ENCODE measurements at regions of chr7 and their contacts with region 1.

Region 1: GRCh38 chr7:94657771-94658693 is 2.1 kb upstream of the SGCE start:
- DNase-seq: peak; percentile 92 to 96 (median 95)
- ATAC-seq: peak; percentile 97
- H3K4me3 ChIP-seq: peak overlapping the region; percentile 27
- H3K27ac ChIP-seq: no peak overlapping the region
- H3K4me1 ChIP-seq: peaks cover 0 to 10% of the 10 kb centered on the region in 2 experiments; a peak in 2 of 5 replicates
- H3K27me3 ChIP-seq: peaks cover 0 to 5% of the 10 kb centered on the region in 2 experiments; a peak in 1 of 5 replicates
- CTCF ChIP-seq: peak in 2 of 3 experiments; percentile 7 to 12; a peak in 1 of 6 replicates
- EP300 ChIP-seq: no peak
- POLR2A ChIP-seq: no peak
- RAD21 ChIP-seq: no peak

Region 2: DNA sequence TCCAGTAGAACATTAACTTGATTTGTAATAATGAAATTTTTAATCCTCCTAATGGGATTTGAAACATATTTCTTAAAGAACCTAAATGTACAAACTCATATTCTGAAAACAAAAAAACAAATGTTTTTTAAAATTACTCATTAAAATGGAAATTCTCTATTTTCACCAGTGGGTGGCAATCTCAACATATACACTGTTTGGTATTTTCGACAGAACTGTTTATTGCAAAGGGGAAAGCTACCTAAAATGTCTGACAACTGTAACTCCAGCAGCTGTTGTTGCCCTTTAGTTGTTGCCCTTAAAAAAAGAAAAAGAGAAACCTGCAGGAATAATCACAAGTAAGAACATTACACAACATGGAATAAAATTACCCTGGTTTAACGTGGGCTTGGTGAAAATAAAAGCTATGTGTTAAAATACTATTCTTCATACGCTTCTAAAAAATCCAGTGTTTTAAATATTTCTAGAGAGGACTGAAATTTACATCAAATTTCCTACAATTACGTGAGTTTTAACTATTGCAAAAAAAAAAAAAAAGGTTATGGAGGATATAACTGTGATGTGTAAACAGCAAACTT is 208.8 kb before region 1 on chr7:
- CTCF ChIA-PET with region 1: no interaction called
- POLR2A ChIA-PET with region 1: no interaction called
- in situ Hi-C with region 1: no loop called
- intact Hi-C with region 1: loop called (anchors 10 kb)
- DNase-seq: peak; percentile 21 to 34 (median 26)
- ATAC-seq: peak; percentile 65
- H3K4me3 ChIP-seq: no peak overlapping the region
- H3K27ac ChIP-seq: no peak overlapping the region
- H3K4me1 ChIP-seq: no peaks in the 10 kb centered on the region
- H3K27me3 ChIP-seq: no peaks in the 10 kb centered on the region
- CTCF ChIP-seq: peak; percentile 32 to 68 (median 38); a peak in 3 of 6 replicates
- EP300 ChIP-seq: no peak
- POLR2A ChIP-seq: no peak
- RAD21 ChIP-seq: peak; percentile 74 to 80

Region 3: DNA sequence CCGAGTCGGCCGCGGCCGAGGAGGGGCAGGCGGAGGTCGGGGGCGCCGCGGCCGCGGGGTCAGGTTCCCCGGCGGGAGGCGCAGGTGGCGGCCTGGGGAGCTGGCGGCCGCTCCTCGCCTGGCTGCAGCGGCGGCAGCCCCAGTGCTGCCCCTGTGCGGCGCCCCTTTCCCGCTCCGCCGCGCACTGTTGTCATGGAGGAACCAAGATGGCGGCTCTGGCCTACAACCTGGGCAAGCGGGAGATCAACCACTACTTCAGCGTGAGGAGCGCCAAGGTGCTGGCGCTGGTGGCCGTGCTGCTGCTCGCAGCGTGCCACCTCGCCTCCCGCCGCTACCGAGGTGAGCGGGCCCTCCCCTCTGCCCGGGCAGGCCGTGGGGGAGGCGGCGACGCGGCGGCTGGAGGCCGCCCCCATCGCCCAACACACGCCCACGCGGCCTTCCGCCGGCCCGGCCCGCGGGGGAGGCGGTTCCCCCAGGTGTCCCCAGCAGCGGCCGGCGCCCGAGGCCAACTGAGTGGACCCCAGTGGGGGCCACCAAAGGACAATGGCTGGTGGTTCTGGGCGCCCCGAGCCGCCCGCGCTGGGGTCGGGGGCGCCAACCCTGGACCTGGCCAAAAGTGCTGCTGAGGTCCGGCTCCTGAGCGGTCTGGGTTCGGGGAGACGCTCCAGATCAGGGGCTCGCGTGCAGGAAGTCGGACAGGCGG is 148.0 kb before region 1 on chr7:
- CTCF ChIA-PET with region 1: no interaction called
- POLR2A ChIA-PET with region 1: no interaction called
- in situ Hi-C with region 1: no loop called
- intact Hi-C with region 1: loop called (anchors 5 kb)
- DNase-seq: peak; percentile 79 to 91 (median 90)
- ATAC-seq: peak; percentile 93
- H3K4me3 ChIP-seq: peak overlapping the region; percentile 71
- H3K27ac ChIP-seq: peak overlapping the region; percentile 95
- H3K4me1 ChIP-seq: peaks cover 12 to 16% of the 10 kb centered on the region in 2 experiments; a peak in 4 of 5 replicates
- H3K27me3 ChIP-seq: no peaks in the 10 kb centered on the region
- CTCF ChIP-seq: peak; percentile 25 to 35 (median 31); a peak in 3 of 6 replicates
- EP300 ChIP-seq: no peak
- POLR2A ChIP-seq: peak; percentile 82
- RAD21 ChIP-seq: no peak

Region 4: DNA sequence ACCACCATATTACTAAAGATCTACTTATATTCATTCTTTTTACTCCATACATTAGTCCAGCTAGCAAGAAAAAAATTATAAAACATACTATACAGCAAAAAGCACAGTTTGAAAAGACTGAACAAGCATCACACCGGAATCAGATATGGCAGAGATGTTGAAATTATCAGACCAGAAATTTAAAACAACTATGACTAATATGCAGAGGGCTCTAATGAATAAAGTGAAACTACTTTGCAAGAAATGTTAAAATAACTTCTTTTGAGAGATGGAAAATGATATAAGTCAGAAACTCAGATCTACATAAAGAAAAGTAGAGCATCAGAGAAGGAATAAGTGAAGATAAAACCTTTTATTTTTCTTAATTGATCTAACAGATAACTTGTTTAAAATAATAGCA is 53.0 kb before region 1 on chr7:
- CTCF ChIA-PET with region 1: no interaction called
- POLR2A ChIA-PET with region 1: no interaction called
- in situ Hi-C with region 1: no loop called
- intact Hi-C with region 1: no loop called
- DNase-seq: no peak
- ATAC-seq: no peak
- H3K4me3 ChIP-seq: no peak overlapping the region
- H3K27ac ChIP-seq: no peak overlapping the region
- H3K4me1 ChIP-seq: no peaks in the 10 kb centered on the region
- H3K27me3 ChIP-seq: no peaks in the 10 kb centered on the region
- CTCF ChIP-seq: no peak
- EP300 ChIP-seq: no peak
- POLR2A ChIP-seq: no peak
- RAD21 ChIP-seq: no peak

Measured in K562 (cell line).